Heart right ventricle (tissue), 16 donors: ENCODE measurements at regions of chr4 and their contacts with region 1.

Region 1: DNA sequence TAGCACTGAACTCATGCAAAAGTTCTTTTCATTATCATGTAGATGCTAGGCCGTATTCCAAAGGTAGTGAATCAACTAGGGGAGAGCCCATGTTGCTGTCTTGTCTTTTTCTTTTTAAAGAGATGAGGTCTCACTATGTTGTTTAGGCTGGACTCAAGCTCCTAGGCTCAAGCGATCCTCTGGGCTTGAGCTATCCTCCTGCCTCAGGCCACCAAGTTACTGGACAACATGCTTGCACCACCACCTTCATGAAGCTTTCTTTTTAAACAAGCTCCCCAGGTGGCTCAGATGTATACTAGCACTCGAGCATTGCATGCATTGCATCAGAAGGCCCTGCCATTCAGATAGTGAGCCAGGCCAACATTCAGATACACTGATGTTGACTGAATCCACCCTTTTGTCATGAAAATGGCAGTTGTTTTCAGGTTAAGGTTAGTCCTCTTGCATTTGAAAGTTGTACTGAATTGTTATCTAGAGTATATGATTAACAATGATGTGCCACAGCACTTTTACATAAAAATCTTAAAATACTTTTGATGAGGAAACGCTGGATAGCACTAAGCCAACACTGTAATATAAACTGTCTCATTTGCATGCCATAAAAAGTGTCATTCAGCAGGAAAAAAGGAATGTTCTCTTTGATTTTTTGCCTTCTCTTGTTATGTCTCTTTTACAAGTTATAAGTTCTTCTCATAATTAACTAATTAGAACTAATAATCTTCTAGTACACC is 76.7 kb downstream of the FNIP2 start:
- DNase-seq: no peak
- ATAC-seq: no peak
- H3K4me3 ChIP-seq: peak overlapping the region in 1 of 10 donors; percentile 13
- H3K27ac ChIP-seq: no peak overlapping the region
- H3K4me1 ChIP-seq: peaks cover 0 to 51% (median 10%) of the 10 kb centered on the region in 9 donors
- H3K27me3 ChIP-seq: no peaks in the 10 kb centered on the region
- CTCF ChIP-seq: no peak

Region 2: GRCh38 chr4:158729716-158730559 is 115.5 kb before region 1 on chr4:
- intact Hi-C with region 1: loop called (anchors 1 to 5 kb)
- DNase-seq: peak; percentile 41 to 69
- ATAC-seq: peak; percentile 89 to 97 (median 96)
- H3K4me3 ChIP-seq: no peak overlapping the region
- H3K27ac ChIP-seq: no peak overlapping the region
- H3K4me1 ChIP-seq: peaks cover 0 to 8% (median 0%) of the 10 kb centered on the region in 9 donors
- H3K27me3 ChIP-seq: no peaks in the 10 kb centered on the region
- CTCF ChIP-seq: peak; percentile 84 to 99 (median 87)

Region 3: GRCh38 chr4:158750379-158750778 is 95.1 kb before region 1 on chr4:
- intact Hi-C with region 1: no loop called
- DNase-seq: no peak
- ATAC-seq: no peak
- H3K4me3 ChIP-seq: no peak overlapping the region
- H3K27ac ChIP-seq: no peak overlapping the region
- H3K4me1 ChIP-seq: no peaks in the 10 kb centered on the region
- H3K27me3 ChIP-seq: no peaks in the 10 kb centered on the region
- CTCF ChIP-seq: no peak

Region 4: DNA sequence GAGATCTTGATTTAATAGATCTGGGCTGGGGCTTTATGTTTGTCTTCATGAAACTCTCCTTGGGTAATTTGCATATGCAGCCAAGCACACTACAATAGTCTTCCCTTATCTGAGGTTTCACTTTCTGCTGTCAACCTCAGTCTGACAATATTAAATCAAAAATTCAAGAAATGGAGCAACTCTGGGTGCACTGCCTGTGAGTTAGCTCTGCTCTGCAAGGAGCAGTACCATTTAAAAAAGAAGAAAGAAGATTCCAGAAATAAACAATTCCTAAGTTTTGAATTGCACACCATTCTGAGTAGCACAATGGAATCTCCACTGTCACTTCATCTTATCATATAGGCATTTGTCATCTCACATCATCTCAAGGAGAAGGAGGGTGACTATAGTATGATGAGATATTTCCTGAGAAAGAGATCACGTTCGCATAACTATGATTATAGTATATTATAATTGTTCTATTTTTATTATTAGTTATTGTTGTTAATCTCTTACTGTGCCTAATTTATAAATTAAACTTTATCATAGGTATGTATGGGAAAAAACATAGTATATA is 67.2 kb before region 1 on chr4:
- intact Hi-C with region 1: loop called in 3 of 10 experiments (anchors 5 kb)
- DNase-seq: no peak
- ATAC-seq: peak in 1 of 8 donors; percentile 26
- H3K4me3 ChIP-seq: no peak overlapping the region
- H3K27ac ChIP-seq: peak overlapping the region in 4 of 10 donors; percentile 7 to 23 (median 14)
- H3K4me1 ChIP-seq: peaks cover 10 to 90% (median 74%) of the 10 kb centered on the region in 9 donors
- H3K27me3 ChIP-seq: no peaks in the 10 kb centered on the region
- CTCF ChIP-seq: no peak

Region 5: DNA sequence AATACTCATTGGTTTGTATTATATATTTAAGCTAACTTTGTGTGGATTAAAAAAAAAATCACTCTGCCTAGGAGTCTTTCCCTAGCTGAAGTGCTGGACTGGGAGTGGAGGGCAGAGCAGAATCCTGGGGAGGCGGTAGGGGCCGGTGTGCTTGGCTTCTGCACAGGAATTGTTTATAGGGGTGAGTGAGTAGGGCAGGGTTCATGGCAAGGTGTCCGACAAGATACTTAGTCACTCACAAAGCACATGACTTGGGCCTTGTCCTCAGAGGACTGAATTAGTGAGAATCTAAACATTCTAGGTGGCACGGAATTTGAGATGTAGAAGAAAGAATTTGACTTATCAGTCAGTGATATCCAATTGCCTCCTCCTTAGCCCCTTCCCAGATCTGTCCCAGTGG is 44.4 kb before region 1 on chr4:
- intact Hi-C with region 1: loop called in 2 of 10 experiments (anchors 5 kb)
- DNase-seq: no peak
- ATAC-seq: peak in 6 of 8 donors; percentile 60 to 76 (median 66)
- H3K4me3 ChIP-seq: no peak overlapping the region
- H3K27ac ChIP-seq: peak overlapping the region in 8 of 10 donors; percentile 10 to 68 (median 44)
- H3K4me1 ChIP-seq: peaks cover 3 to 85% (median 50%) of the 10 kb centered on the region in 9 donors
- H3K27me3 ChIP-seq: no peaks in the 10 kb centered on the region
- CTCF ChIP-seq: no peak

Region 6: GRCh38 chr4:158826057-158826456 is 19.4 kb before region 1 on chr4:
- intact Hi-C with region 1: loop called in 1 of 10 experiments (anchors 1 kb)
- DNase-seq: no peak
- ATAC-seq: peak; percentile 30 to 79 (median 55)
- H3K4me3 ChIP-seq: no peak overlapping the region
- H3K27ac ChIP-seq: peak overlapping the region; percentile 40 to 83 (median 68)
- H3K4me1 ChIP-seq: peaks cover 27 to 76% (median 63%) of the 10 kb centered on the region in 9 donors
- H3K27me3 ChIP-seq: no peaks in the 10 kb centered on the region
- CTCF ChIP-seq: no peak